H1 (cell line): ENCODE measurements at regions of chr1 and their contacts with region 1.

Region 1: GRCh38 chr1:162276493-162276892 is 100.2 kb downstream of the SPATA46 start:
- DNase-seq: no peak
- H3K4me3 ChIP-seq: no peak overlapping the region
- H3K27ac ChIP-seq: no peak overlapping the region
- H3K4me1 ChIP-seq: no peaks in the 10 kb centered on the region
- H3K27me3 ChIP-seq: no peaks in the 10 kb centered on the region
- CTCF ChIP-seq: peak in 2 of 3 experiments; percentile 15 to 34; a peak in 2 of 4 replicates
- EP300 ChIP-seq: no peak
- POLR2A ChIP-seq: no peak
- RAD21 ChIP-seq: peak; percentile 61 to 63

Region 2: DNA sequence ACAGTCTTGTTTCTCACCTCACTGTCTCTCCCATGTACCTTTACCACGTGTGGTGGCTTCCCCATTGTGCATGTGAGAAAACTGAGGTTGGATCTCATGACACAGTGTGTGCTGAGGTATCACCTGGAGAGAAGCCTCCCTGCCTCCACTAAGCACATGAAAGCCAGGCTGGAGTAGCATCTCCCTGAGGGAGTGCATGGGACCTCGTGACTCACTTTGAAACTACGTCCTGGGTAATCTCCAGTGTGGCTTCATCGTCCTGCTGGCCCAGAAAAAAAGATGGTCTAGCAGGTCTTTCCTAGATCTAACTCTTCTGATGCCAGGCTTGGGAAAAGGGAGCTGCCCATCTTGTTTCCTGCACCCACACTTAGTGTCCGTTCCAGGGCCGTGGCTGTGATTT is 13.4 kb after region 1 on chr1:
- CTCF ChIA-PET with region 1: no interaction called
- POLR2A ChIA-PET with region 1: no interaction called
- DNase-seq: no peak
- H3K4me3 ChIP-seq: no peak overlapping the region
- H3K27ac ChIP-seq: no peak overlapping the region
- H3K4me1 ChIP-seq: peaks cover 0 to 2% (median 0%) of the 10 kb centered on the region in 4 experiments; a peak in 3 of 7 replicates
- H3K27me3 ChIP-seq: no peaks in the 10 kb centered on the region
- CTCF ChIP-seq: no peak
- EP300 ChIP-seq: no peak
- POLR2A ChIP-seq: no peak
- RAD21 ChIP-seq: no peak

Region 3: GRCh38 chr1:162300057-162300917 is 23.8 kb after region 1 on chr1:
- CTCF ChIA-PET with region 1: interaction called, 12 read pairs
- POLR2A ChIA-PET with region 1: no interaction called
- DNase-seq: no peak
- H3K4me3 ChIP-seq: no peak overlapping the region
- H3K27ac ChIP-seq: peak overlapping the region; percentile 70; the same call in 1 of the 2 replicates
- H3K4me1 ChIP-seq: peaks cover 0 to 9% (median 6%) of the 10 kb centered on the region in 4 experiments; a peak in 5 of 7 replicates
- H3K27me3 ChIP-seq: no peaks in the 10 kb centered on the region
- CTCF ChIP-seq: peak; percentile 38 to 72 (median 42)
- EP300 ChIP-seq: no peak
- POLR2A ChIP-seq: no peak
- RAD21 ChIP-seq: peak; percentile 58 to 64

Region 4: DNA sequence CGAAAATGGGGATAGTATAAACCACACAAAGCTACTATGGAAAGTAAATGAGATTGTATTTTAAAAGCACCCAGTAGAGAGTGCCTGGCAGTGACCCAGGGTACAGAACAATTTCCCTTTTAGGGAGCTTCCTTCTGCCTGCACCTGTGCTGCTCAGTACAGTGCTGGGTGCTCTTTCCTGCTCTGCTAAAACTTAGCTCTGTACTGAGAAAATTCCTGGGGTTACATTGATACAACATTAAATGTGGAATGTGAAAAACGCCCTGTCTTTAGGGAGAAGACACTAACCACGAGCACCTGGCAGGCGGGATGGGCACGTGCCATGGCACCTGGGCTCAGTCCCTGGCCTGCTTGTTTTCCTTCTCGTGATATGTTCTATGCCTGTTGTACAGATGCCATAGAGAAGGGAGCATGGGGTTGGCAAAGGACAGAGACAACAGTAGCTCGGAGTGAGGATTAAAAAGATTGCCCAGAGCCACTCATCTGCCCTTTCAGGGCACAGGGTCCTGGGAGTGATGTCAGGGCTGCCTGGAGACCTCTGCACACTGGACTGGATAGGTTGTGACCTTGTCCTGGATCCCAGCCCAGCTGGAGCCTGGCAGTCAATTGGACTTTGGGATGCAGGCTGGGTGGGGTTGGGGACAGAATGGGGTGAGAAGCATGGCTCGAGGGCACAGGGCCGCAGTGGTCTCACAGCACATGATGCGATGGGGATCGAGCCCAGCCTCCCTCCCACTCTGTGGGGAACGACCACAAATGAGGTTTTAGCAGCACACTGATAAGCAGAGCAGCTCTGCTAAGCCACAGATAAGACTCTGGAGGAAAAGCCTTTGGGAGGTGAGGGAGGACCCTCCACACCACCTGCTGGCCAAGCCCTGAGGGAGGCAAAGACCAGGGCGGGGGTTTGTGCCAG is 95.9 kb after region 1 on chr1:
- CTCF ChIA-PET with region 1: no interaction called
- POLR2A ChIA-PET with region 1: no interaction called
- DNase-seq: no peak
- H3K4me3 ChIP-seq: no peak overlapping the region
- H3K27ac ChIP-seq: no peak overlapping the region
- H3K4me1 ChIP-seq: no peaks in the 10 kb centered on the region
- H3K27me3 ChIP-seq: no peaks in the 10 kb centered on the region
- CTCF ChIP-seq: no peak
- EP300 ChIP-seq: no peak
- POLR2A ChIP-seq: no peak
- RAD21 ChIP-seq: no peak

Region 5: GRCh38 chr1:162463021-162463420 is 186.5 kb after region 1 on chr1:
- CTCF ChIA-PET with region 1: no interaction called
- POLR2A ChIA-PET with region 1: no interaction called
- DNase-seq: no peak
- H3K4me3 ChIP-seq: no peak overlapping the region
- H3K27ac ChIP-seq: no peak overlapping the region
- H3K4me1 ChIP-seq: no peaks in the 10 kb centered on the region
- H3K27me3 ChIP-seq: no peaks in the 10 kb centered on the region
- CTCF ChIP-seq: no peak
- EP300 ChIP-seq: no peak
- POLR2A ChIP-seq: no peak
- RAD21 ChIP-seq: no peak